Cardiac septum (tissue), 1 donor: ENCODE measurements at regions of chr1 and their contacts with region 1.

Region 1: DNA sequence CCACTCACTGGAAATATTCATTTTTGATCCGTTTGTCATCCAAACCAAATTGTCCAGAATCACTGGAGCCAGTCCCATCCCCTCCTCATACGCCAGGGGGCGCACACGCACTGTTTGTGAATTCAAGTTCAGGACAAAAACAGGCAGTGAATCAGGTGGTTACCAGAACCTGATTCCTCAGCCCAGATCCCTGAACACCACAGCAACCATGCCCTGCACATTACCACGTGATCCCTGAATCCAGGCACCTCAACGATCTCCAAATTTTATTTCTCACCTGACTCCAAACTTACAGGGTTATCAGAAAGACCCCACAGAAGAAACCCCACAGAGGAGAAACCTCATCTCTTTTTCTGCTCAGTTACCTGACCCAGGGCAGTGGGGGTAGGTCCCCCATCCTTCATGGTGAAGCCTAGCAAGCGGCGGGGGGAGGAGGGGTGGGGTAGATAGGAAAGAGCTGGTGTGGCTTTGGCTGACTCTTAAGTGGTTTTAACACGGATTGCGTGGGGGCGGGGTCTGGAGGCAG is 1.4 kb upstream of the PTPRF start:
- DNase-seq: peak; percentile 87

Region 2: DNA sequence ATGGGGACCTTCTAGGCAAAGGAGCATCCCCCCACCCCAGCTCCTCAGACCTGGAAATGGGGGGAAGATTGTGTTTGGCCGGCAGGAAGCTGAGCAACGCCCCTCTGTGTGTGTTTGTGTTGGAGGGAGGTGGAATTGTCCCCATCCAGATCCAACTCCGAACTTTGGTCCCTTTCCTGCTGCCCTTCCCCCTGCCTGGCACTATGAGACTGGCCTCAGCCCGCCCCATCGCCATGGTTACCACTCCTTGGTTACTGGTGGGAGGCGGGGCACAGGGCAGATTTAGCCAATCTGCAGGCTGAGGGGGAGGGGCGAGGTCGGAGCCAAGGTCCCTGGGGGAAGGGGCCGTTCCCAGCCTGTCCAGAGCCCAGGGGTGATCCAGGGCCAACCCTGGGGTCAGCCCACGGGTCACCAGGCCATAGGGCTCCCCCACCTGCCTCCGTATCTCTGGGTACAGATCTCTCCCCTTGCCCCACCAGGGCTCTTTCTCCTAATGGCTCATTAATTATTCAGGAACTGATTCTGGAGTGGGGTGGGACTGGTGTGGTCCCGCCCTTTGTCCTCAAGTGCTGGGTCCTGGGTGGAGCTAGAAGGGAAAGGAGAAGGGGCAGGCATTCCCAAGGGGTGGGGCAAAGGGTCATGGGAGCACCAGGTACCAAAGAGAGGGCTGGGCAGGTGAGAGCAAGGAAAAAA is 16.6 kb after region 1 on chr1:
- intact Hi-C with region 1: no loop called
- DNase-seq: no peak

Region 3: GRCh38 chr1:43650310-43651085 is 121.2 kb after region 1 on chr1:
- intact Hi-C with region 1: loop called (anchors 2 kb)
- DNase-seq: peak; percentile 96

Region 4: GRCh38 chr1:43688594-43689000 is 159.3 kb after region 1 on chr1:
- intact Hi-C with region 1: no loop called
- DNase-seq: peak; percentile 24

Region 5: DNA sequence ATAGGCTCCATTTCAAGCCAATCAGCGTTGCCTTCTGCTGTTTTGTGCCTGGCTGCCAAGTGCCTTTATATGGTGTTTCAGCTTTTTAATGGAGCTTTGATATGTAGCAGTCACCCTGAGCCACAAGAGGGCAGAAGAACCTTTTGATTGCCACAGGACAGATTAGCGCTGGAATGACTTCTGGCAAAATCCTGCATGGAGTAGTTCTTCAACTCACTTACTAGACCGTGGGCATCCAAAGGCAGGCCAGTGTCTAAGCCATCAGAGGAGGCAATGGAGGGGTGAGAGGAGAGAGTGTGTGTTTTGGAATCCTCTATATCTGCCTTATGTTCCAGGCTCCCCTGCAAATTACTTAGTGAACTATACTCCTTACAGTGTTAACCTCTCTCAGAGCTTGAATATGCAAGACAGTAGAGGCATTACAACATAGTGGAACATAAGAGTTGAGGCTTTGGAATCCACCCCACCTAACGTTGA is 234.3 kb after region 1 on chr1:
- intact Hi-C with region 1: loop called (anchors 5 kb)
- DNase-seq: no peak

Region 6: GRCh38 chr1:43934101-43934985 is 405.1 kb after region 1 on chr1:
- intact Hi-C with region 1: loop called (anchors 2 kb)
- DNase-seq: no peak

Region 7: DNA sequence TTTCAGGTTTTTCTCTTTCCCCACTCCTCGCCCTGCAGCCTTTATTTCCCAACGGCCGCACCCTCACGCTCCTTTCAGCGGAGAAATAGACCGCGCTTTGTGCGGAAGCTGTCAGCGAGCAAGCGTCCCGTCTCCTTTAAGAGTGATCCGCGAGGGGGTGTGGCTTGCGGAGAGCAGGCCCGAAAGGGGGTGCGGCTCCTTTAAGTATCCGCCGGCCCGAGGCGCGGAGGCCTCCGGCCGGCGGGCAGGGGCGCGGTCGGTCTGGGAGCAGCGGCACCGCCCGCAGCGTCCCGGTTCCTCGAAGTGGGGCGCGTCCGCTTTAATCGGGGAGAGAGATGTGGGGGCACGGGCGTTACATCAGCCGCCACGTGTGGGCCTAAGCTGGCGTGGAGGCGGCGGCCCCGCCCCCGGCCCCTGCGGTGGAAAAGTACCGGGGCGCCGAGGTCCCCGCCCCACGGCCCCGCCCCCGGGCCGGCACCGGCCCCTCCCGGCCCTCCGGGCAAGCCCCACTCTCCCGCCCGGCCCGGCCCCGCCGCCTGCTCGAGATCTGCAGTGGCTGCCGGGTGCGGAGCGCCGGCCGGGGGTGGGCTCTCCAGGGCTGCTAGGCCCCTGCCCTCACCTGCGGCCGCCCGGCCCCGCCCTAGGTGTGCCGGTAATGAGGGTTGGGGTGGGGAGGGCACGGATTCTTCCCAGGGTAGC is 500.8 kb after region 1 on chr1:
- intact Hi-C with region 1: loop called (anchors 10 kb)
- DNase-seq: peak; percentile 95